Motor neuron (in vitro differentiated cells): ENCODE measurements at regions of chr18 and their contacts with region 1.

Region 1: GRCh38 chr18:67199993-67200617 is 316.4 kb downstream of the DSEL start:
- ATAC-seq: peak; percentile 56 to 85 (median 76)
- H3K4me3 ChIP-seq: no peak overlapping the region
- H3K27ac ChIP-seq: no peak overlapping the region
- H3K4me1 ChIP-seq: no peaks in the 10 kb centered on the region

Region 2: GRCh38 chr18:66838340-66838987 is 361.6 kb before region 1 on chr18:
- in situ Hi-C with region 1: no loop called
- ATAC-seq: no peak
- H3K4me3 ChIP-seq: no peak overlapping the region
- H3K27ac ChIP-seq: no peak overlapping the region
- H3K4me1 ChIP-seq: no peaks in the 10 kb centered on the region

Region 3: DNA sequence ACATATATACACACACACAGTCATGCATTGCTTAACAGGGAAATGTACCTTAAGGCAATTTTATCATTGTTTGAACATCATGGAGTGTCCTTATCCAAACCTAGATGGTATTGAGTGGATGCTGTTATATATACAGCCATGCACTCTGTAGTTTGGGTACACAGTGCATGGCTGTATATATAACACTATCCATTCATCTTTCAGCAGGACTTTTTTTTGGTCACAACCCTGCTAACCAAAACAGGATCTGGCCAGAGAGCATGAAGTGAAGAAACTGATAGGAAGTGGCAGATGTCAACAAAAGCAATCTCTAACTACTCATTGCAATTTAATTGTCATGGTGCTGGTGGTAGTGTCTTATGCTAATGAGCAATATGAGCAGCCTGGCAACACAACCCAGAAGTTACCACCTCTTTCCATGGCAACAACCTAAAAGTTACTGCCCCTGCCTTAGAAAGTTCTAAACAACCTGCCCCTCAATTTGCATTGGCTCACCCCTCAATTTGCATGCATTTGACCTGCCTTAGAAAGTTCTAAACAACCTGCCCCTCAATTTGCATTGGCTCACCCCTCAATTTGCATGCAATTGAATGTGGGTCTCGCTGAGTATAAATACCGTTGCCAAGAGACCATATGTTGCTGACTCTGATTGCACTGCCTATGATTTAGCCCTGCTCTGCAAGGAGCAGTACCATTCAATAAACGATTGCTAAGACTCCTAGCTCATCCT is 118.5 kb before region 1 on chr18:
- in situ Hi-C with region 1: loop called in 1 of 9 experiments (anchors 25 kb)
- ATAC-seq: peak; percentile 87 to 94 (median 93)
- H3K4me3 ChIP-seq: no peak overlapping the region
- H3K27ac ChIP-seq: no peak overlapping the region
- H3K4me1 ChIP-seq: peaks cover 4 to 7% of the 10 kb centered on the region in 2 donors